GM12878 (cell line): ENCODE measurements at regions of chr22 and their contacts with region 1.

Region 1: GRCh38 chr22:37316875-37317371 is 34.6 kb downstream of the CYTH4 start:
- DNase-seq: no peak
- ATAC-seq: peak; percentile 83
- H3K4me3 ChIP-seq: no peak overlapping the region
- H3K27ac ChIP-seq: no peak overlapping the region
- H3K4me1 ChIP-seq: peaks cover 21% of the 10 kb centered on the region
- H3K27me3 ChIP-seq: peaks cover 0 to 1% of the 10 kb centered on the region in 2 experiments; a peak in 1 of 4 replicates
- CTCF ChIP-seq: peak; percentile 91 to 97 (median 96); a peak in 5 of 6 replicates
- EP300 ChIP-seq: no peak
- POLR2A ChIP-seq: no peak
- RAD21 ChIP-seq: peak; percentile 99

Region 2: DNA sequence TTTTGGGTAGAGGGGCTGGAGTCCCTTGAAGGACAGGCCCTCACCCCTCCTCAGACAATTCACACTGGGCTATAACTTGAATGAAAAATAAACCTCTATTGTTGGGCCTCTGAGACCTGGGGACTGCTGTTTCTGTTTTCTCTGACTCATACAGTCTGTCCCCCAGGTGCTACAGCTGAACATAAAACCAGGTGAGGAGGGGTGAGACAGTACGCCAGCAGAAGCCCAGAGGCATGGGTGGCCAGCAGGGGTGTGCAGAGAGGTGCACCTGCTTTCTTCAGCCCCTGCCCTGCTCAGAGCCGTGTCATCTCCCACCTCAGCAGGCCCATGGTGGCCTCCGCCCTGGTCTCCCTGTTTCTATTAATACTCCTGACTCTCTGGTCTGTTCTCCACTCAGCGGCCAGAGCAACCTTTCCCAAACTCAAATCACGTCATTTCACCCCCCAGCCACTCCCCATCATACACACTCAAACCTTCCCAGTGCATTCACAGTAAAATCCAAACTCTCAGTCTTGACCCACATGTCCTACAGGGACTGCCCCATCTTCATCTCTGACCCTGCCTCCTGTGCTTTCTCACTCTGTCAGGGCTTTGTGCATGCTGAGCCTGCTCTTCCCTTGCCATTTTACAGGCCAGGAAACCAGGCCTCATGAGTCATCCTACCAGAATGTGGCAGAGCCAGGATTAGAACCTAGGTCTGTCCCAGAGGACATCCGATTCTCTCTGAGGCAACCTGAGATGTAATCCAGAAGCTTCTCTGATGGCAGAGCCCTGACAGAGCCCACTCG is 161.8 kb before region 1 on chr22:
- CTCF ChIA-PET with region 1: no interaction called
- POLR2A ChIA-PET with region 1: no interaction called
- RAD21 ChIA-PET with region 1: no interaction called
- SMC1A ChIA-PET with region 1: no interaction called
- in situ Hi-C with region 1: no loop called
- intact Hi-C with region 1: no loop called
- DNase-seq: no peak
- ATAC-seq: peak; percentile 79
- H3K4me3 ChIP-seq: 0 out of 2 replicates have a peak overlapping the region, but pooled peaks have one; percentile 10
- H3K27ac ChIP-seq: peak overlapping the region; percentile 21
- H3K4me1 ChIP-seq: peaks cover 50% of the 10 kb centered on the region
- H3K27me3 ChIP-seq: no peaks in the 10 kb centered on the region
- CTCF ChIP-seq: no peak
- EP300 ChIP-seq: no peak
- POLR2A ChIP-seq: no peak
- RAD21 ChIP-seq: no peak

Region 3: GRCh38 chr22:37267135-37267587 is 49.8 kb before region 1 on chr22:
- CTCF ChIA-PET with region 1: interaction called, 181 read pairs
- POLR2A ChIA-PET with region 1: interaction called, 6 read pairs
- RAD21 ChIA-PET with region 1: interaction called, 35 read pairs
- SMC1A ChIA-PET with region 1: interaction called, 65 read pairs
- in situ Hi-C with region 1: no loop called
- intact Hi-C with region 1: loop called (anchors 2 kb)
- DNase-seq: no peak
- ATAC-seq: peak; percentile 96
- H3K4me3 ChIP-seq: peak overlapping the region; percentile 52
- H3K27ac ChIP-seq: peak overlapping the region; percentile 76
- H3K4me1 ChIP-seq: peaks cover 7% of the 10 kb centered on the region
- H3K27me3 ChIP-seq: no peaks in the 10 kb centered on the region
- CTCF ChIP-seq: peak; percentile 86 to 97 (median 89)
- EP300 ChIP-seq: no peak
- POLR2A ChIP-seq: no peak
- RAD21 ChIP-seq: peak; percentile 83

Region 4: DNA sequence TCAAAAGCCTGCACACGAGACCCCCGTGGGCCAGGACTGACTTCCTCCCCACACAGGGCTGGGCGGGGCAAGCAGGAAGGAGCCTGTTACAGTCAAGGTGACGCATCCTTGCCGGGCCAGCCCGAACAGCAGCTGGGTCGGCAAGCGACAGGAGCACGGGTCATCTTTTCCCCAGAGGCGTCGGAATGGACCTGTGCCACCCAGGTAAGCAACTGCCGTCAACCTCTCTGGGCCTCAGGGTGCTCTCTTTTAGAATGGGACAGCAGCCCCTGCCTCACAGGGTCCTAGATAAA is 34.6 kb before region 1 on chr22 and contains the start of gene CYTH4:
- CTCF ChIA-PET with region 1: interaction called, 10 read pairs
- POLR2A ChIA-PET with region 1: interaction called, 3 read pairs
- RAD21 ChIA-PET with region 1: interaction called, 9 read pairs
- SMC1A ChIA-PET with region 1: interaction called, 8 read pairs
- in situ Hi-C with region 1: no loop called
- intact Hi-C with region 1: no loop called
- DNase-seq: no peak
- ATAC-seq: peak; percentile 79
- H3K4me3 ChIP-seq: peak within 1 kb of the TSS; percentile 69
- H3K27ac ChIP-seq: peak within 1 kb of the TSS; percentile 93
- H3K4me1 ChIP-seq: peaks cover 30% of the 10 kb centered on the region
- H3K27me3 ChIP-seq: no peaks in the 10 kb centered on the region
- CTCF ChIP-seq: no peak
- EP300 ChIP-seq: no peak
- POLR2A ChIP-seq: peak; percentile 80
- RAD21 ChIP-seq: no peak
- polyA plus RNA-seq, gene CYTH4: 1.5 to 1.8 TPM

Region 5: DNA sequence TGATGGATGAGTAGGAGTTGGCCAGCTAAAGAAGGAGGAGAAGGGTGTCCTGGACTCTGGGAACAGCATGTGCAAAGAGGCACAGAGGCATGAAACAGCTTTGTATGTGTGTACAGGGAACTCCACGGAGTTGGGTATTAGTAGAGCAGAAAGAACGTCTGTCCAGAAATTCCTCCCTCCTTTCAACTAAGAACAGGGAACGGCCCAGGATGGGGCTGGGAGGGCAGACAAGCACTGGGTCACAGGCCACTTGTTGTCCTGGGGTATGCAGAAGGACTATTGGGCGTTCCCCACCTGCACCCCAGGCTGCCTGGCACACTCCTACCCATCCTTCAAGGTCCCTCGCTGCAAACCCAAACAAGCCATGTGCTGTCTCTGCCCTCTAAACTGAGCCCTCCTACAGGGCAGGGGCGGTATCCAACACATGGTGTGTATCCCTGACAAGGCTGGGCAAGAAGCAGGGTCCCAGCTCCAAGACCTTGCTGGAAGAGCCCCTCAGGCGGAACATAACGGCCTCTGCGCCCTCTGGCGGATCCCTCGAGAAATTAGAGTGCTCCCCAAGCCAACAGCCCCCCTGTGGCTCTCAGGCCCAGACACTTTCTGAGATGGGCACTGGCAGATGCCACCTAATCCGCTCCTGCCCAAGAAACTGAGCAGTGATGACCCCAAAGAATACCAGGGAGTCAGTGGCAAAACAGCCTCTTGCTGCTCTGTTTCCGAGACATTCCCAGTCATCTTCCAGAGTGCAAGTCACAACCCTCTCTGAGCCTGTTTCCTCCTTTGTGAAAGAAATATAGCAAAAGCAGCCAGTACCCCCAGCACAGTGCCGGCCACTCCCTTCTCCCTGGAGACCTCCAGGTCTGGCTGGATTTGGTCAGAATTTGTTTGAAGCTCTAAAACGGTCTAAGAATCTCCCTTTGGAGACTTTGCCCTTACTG is 112.0 kb after region 1 on chr22:
- CTCF ChIA-PET with region 1: interaction called, 72 read pairs
- POLR2A ChIA-PET with region 1: interaction called, 3 read pairs
- RAD21 ChIA-PET with region 1: interaction called, 36 read pairs
- SMC1A ChIA-PET with region 1: interaction called, 40 read pairs
- in situ Hi-C with region 1: no loop called
- intact Hi-C with region 1: loop called (anchors 1 kb)
- DNase-seq: no peak
- ATAC-seq: peak; percentile 87
- H3K4me3 ChIP-seq: no peak overlapping the region
- H3K27ac ChIP-seq: no peak overlapping the region
- H3K4me1 ChIP-seq: no peaks in the 10 kb centered on the region
- H3K27me3 ChIP-seq: peaks cover 11 to 15% of the 10 kb centered on the region in 2 experiments
- CTCF ChIP-seq: peak; percentile 75 to 81 (median 75)
- EP300 ChIP-seq: no peak
- POLR2A ChIP-seq: no peak
- RAD21 ChIP-seq: peak; percentile 56

Region 6: DNA sequence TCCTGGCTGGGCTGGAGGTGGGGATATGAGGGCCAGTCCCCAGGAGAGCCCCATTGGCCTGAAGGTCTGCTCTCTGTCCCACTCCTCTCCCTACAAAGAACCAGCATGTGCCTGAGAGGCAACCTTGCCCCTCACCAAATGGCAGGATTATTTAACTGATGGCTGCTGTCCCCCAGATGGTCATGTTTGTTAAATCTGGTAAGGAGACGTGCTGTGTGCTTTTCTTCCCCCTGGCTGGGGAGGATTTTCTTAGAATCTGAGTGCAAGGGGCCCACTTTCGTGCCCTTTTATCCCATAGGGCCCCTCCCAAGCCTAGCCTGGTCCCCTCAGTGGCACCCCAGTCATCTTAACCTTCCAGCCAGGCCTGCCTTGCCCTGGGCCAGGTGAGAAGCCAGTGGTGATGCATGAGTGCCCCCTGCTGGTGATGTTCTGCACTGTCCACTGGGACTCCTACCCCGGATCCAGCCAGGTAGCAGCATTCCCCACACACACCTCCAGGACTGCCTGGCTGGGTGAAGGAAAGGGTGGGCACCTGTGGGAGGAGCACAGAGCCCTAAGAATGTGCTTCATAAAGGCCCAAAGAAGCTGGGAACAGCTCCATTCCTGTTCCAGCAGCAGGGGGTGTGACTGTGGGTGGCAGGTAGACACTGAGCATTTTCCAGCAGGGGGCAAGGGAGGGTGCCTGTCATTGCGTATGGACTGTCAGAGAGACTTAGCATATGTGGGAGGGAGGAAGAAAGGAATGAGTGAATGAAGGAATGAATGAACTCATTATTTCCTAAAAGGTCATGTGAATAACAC is 140.4 kb after region 1 on chr22:
- CTCF ChIA-PET with region 1: interaction called, 90 read pairs
- POLR2A ChIA-PET with region 1: no interaction called
- RAD21 ChIA-PET with region 1: interaction called, 44 read pairs
- SMC1A ChIA-PET with region 1: interaction called, 26 read pairs
- in situ Hi-C with region 1: loop called (anchors 5 kb)
- intact Hi-C with region 1: loop called (anchors 1 kb)
- DNase-seq: peak; percentile 24
- ATAC-seq: peak; percentile 100
- H3K4me3 ChIP-seq: no peak overlapping the region
- H3K27ac ChIP-seq: no peak overlapping the region
- H3K4me1 ChIP-seq: no peaks in the 10 kb centered on the region
- H3K27me3 ChIP-seq: no peaks in the 10 kb centered on the region
- CTCF ChIP-seq: peak; percentile 88 to 98 (median 96)
- EP300 ChIP-seq: no peak
- POLR2A ChIP-seq: no peak
- RAD21 ChIP-seq: peak; percentile 97

Region 7: GRCh38 chr22:37533995-37534394 is 217.1 kb after region 1 on chr22:
- CTCF ChIA-PET with region 1: no interaction called
- POLR2A ChIA-PET with region 1: no interaction called
- RAD21 ChIA-PET with region 1: no interaction called
- SMC1A ChIA-PET with region 1: no interaction called
- in situ Hi-C with region 1: no loop called
- intact Hi-C with region 1: no loop called
- DNase-seq: peak; percentile 28
- ATAC-seq: peak; percentile 18
- H3K4me3 ChIP-seq: no peak overlapping the region
- H3K27ac ChIP-seq: no peak overlapping the region
- H3K4me1 ChIP-seq: peaks cover 15% of the 10 kb centered on the region
- H3K27me3 ChIP-seq: no peaks in the 10 kb centered on the region
- CTCF ChIP-seq: no peak
- EP300 ChIP-seq: 0 out of 4 replicates have a peak, but pooled peaks of 1 of the 2 experiments have one; percentile 31
- POLR2A ChIP-seq: no peak
- RAD21 ChIP-seq: no peak

Region 8: DNA sequence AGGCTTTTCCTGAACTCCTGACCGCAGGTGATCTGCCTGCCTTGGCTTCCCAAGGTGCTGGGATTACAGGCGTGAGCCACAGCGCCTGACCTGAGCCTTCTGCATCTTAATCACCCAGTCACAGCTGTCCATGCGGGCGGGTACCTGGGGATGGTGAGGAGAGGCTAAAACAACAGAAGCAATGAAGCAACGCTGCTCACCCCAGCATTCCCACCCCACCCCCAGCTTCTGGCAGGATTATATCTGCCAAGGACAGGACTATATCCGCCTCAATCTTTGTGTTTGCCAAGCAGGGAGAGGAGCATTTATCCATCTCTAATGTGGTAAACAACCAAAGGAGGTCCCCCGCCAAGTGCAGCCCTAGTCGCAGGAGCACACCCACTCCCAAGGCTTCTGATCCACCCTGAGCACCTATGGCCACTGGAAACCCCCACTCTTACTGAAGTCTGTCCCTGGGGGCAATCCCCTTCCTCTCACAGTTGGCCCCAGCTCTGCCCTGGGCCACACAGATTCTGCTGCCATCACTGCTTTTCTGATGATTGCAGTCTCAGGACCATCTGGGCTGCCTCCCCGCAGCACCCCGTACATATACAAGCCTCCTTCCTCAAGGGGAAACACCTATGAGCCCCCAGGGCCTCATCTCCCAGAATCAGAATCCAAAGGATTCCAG is 271.8 kb after region 1 on chr22:
- CTCF ChIA-PET with region 1: interaction called, 8 read pairs
- POLR2A ChIA-PET with region 1: interaction called, 4 read pairs
- RAD21 ChIA-PET with region 1: interaction called, 3 read pairs
- SMC1A ChIA-PET with region 1: interaction called, 13 read pairs
- in situ Hi-C with region 1: no loop called
- intact Hi-C with region 1: no loop called
- DNase-seq: no peak
- ATAC-seq: peak; percentile 56
- H3K4me3 ChIP-seq: no peak overlapping the region
- H3K27ac ChIP-seq: no peak overlapping the region
- H3K4me1 ChIP-seq: peaks cover 31% of the 10 kb centered on the region
- H3K27me3 ChIP-seq: no peaks in the 10 kb centered on the region
- CTCF ChIP-seq: no peak
- EP300 ChIP-seq: no peak
- POLR2A ChIP-seq: no peak
- RAD21 ChIP-seq: no peak

Region 9: DNA sequence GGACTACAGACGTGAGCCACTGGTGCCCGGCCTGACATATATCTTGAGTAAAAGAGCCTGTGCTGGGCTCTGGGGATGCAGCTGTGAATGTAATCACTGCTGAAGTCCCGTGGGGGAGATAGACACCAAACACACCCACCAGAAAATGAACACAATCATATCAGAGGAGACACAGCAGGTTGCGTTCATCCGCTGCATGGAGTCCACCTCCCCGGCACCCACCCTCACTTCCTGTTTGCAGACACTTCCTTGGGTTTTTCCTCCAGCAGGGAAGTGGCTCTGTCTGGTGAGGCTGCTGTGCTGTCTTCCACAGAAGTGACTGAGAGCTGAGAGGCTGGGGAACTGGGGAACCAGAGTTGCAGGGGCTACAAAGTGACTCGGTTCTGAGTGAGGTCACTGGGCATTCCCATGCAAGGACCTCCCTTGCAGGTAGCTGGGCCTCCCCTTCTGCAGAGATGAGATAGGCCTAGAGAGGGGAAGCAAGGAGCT is 596.4 kb after region 1 on chr22:
- CTCF ChIA-PET with region 1: no interaction called
- POLR2A ChIA-PET with region 1: no interaction called
- RAD21 ChIA-PET with region 1: no interaction called
- SMC1A ChIA-PET with region 1: no interaction called
- in situ Hi-C with region 1: no loop called
- intact Hi-C with region 1: no loop called
- DNase-seq: no peak
- ATAC-seq: no peak
- H3K4me3 ChIP-seq: no peak overlapping the region
- H3K27ac ChIP-seq: no peak overlapping the region
- H3K4me1 ChIP-seq: no peaks in the 10 kb centered on the region
- H3K27me3 ChIP-seq: no peaks in the 10 kb centered on the region
- CTCF ChIP-seq: no peak
- EP300 ChIP-seq: no peak
- POLR2A ChIP-seq: no peak
- RAD21 ChIP-seq: no peak